ENCODE measurements at regions of chr3 and their contacts with region 1.

Region 1: DNA sequence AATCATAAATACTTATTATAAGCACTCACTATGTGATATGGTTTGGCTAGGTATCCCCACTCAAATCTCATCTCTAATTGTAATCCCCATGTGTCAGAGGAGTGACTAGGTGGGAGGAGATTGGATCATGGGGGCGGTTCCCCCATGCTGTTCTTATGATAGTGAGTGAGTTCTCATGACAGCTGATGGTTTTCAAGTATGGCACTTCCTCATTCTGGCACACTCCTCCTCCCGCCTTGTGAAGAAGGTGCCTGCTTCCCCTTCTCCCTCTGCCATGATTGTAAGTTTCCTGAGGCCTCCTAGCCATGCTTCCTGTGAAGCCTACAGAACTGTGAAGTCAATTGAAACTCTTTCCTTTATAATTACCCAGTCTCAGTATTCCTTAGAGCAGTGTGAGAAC is 53.3 kb upstream of the CHMP2B start:
- DNase-seq: no peak
- ATAC-seq: no peak
- H3K4me3 ChIP-seq: no peak overlapping the region
- H3K27ac ChIP-seq: no peak overlapping the region
- H3K4me1 ChIP-seq: no peaks in the 10 kb centered on the region
- H3K27me3 ChIP-seq: no peaks in the 10 kb centered on the region
- CTCF ChIP-seq: no peak

Region 2: DNA sequence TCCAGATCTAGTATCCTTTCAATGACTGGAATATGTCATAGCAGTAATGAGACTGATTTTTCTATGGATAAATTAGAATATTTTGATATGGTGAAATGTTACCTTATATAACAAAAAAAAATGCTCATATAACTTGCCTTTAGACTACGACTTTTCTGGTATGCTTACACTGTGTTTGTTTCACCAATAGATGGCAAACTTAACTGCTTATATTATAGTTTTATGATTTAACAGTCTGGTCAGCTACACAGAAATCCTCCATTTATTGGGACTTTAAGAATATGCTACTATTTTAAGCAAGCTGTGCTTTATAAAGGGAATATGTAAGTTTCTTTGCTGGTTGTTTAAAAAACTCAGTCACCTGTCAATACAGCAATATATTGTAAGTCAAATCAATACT is 388.4 kb before region 1 on chr3:
- intact Hi-C with region 1: loop called in 1 of 2 experiments (anchors 5 kb)
- DNase-seq: no peak
- ATAC-seq: no peak
- H3K4me3 ChIP-seq: no peak overlapping the region
- H3K27ac ChIP-seq: no peak overlapping the region
- H3K4me1 ChIP-seq: no peaks in the 10 kb centered on the region
- H3K27me3 ChIP-seq: no peaks in the 10 kb centered on the region
- CTCF ChIP-seq: no peak

Region 3: DNA sequence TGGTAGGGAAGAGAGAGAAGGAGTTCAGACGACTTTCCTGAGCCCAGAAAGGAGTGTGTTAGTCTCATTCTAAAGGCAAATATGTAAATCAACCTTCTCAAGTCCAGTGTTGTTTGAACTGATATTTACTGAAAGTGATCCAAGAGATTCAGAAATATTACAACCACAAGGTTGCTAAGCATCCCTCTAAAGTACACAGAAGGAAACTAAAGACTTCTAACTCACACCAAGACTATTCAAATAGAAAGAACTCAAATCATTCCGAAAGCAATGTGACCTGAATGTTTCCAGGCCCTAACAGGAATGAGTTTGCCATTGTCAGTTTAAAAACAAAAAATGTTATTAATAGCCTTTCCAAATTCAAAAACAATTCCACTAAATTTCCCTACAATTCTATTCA is 125.9 kb before region 1 on chr3:
- intact Hi-C with region 1: no loop called
- DNase-seq: no peak
- ATAC-seq: no peak
- H3K4me3 ChIP-seq: no peak overlapping the region
- H3K27ac ChIP-seq: no peak overlapping the region
- H3K4me1 ChIP-seq: no peaks in the 10 kb centered on the region
- H3K27me3 ChIP-seq: no peaks in the 10 kb centered on the region
- CTCF ChIP-seq: no peak

Region 4: DNA sequence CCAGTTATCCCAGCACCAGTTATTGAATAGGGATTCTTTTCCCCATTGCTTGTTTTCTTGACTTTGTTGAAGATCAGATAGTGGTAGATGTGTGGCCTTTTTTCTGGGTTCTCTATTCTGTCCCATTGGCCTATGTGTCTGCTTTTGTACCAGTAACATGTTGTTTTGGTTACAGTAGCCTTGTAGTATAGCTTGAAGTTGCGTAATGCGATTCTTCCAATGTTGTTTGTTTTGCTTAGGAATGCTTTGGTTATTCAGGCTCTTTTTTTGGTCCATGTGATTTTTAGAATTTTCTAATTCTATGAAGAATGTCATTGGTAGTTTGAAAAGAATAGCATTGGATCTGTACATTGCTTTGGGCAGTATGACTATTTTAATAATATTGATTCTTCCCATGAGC is 41.0 kb before region 1 on chr3:
- intact Hi-C with region 1: no loop called
- DNase-seq: no peak
- ATAC-seq: no peak
- H3K4me3 ChIP-seq: no peak overlapping the region
- H3K27ac ChIP-seq: no peak overlapping the region
- H3K4me1 ChIP-seq: no peaks in the 10 kb centered on the region
- H3K27me3 ChIP-seq: no peaks in the 10 kb centered on the region
- CTCF ChIP-seq: no peak

Region 5: DNA sequence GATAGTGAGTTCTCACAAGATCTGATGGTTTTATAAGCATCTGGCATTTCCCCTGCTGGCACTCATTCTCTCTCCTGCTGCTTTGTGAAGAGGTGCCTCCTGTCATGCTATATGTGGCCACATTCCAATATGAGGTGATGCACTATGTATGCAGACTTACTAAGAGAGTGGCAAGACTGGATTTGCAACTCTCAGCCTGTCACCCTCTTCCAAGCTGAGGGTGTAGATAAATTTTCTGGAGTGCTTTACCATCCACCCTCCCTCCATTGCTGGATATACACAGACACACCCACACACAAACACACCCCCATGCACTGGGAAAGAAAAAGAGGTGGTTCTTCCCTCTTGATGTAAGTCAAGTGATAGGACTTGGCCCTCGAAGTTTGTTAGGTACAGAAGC is 23.1 kb after region 1 on chr3:
- intact Hi-C with region 1: no loop called
- DNase-seq: no peak
- ATAC-seq: no peak
- H3K4me3 ChIP-seq: no peak overlapping the region
- H3K27ac ChIP-seq: no peak overlapping the region
- H3K4me1 ChIP-seq: no peaks in the 10 kb centered on the region
- H3K27me3 ChIP-seq: no peaks in the 10 kb centered on the region
- CTCF ChIP-seq: no peak

Measured in psoas muscle (tissue), 8 donors.